Breast epithelium (tissue), 4 donors: ENCODE measurements at regions of chr18 and their contacts with region 1.

Region 1: GRCh38 chr18:62486304-62486964 is 36.4 kb upstream of the ZCCHC2 start:
- DNase-seq: peak in 1 of 2 donors; percentile 38
- H3K4me3 ChIP-seq: no peak overlapping the region
- H3K27ac ChIP-seq: peak overlapping the region; percentile 70 to 82
- H3K4me1 ChIP-seq: peaks cover 0 to 7% of the 10 kb centered on the region in 2 donors
- H3K27me3 ChIP-seq: no peaks in the 10 kb centered on the region
- CTCF ChIP-seq: no peak
- POLR2A ChIP-seq: no peak

Region 2: GRCh38 chr18:62505669-62506494 is 19.4 kb after region 1 on chr18:
- intact Hi-C with region 1: no loop called
- DNase-seq: no peak
- H3K4me3 ChIP-seq: peak overlapping the region; percentile 34 to 57 (median 55)
- H3K27ac ChIP-seq: peak overlapping the region; percentile 62 to 80
- H3K4me1 ChIP-seq: no peaks in the 10 kb centered on the region
- H3K27me3 ChIP-seq: no peaks in the 10 kb centered on the region
- CTCF ChIP-seq: no peak
- POLR2A ChIP-seq: no peak

Region 3: GRCh38 chr18:64379662-64380061 is 1893.2 kb after region 1 on chr18:
- intact Hi-C with region 1: loop called (anchors 10 kb)
- DNase-seq: no peak
- H3K4me3 ChIP-seq: no peak overlapping the region
- H3K27ac ChIP-seq: no peak overlapping the region
- H3K4me1 ChIP-seq: no peaks in the 10 kb centered on the region
- H3K27me3 ChIP-seq: no peaks in the 10 kb centered on the region
- CTCF ChIP-seq: no peak
- POLR2A ChIP-seq: no peak